AG04450 (cell line): ENCODE measurements at regions of chr6 and their contacts with region 1.

Region 1: GRCh38 chr6:16761471-16762267 is 409 bp upstream of the ATXN1 start:
- DNase-seq: peak; percentile 80
- H3K4me3 ChIP-seq: peak overlapping the region; percentile 88
- H3K27ac ChIP-seq: peak overlapping the region; percentile 75
- H3K27me3 ChIP-seq: no peaks in the 10 kb centered on the region
- CTCF ChIP-seq: no peak; the same call in 1 of the 2 replicates

Region 2: DNA sequence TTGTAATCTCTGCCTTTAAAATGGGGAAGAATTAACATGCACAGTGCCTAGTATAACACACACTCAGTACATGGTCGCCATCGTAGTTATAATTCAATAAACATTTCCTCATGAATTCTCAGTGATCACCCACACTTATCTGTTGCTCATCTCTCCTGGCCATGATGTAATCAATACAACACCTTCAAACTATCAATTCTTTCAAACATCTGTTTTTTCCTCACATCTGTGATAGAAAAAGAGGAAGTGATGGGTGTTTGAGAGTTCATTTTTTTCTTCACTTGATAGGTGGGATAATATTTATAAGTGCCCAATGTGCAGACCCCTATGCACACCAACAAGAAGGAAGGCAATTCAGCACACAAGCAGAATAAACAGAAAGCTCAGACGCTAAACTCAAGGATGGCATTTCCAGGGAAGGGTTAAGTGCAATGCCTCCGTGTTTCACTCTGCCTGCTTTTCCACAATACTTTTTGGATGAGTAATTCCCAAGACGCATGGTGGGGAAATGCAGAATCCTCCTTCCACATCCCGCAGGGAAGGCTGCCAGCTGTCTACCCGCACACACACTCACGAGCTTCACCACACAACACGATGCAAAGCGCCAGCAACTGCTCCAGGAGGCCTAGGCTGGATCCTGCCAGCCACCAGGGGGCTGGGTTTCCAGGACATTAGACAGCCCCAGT is 422.9 kb before region 1 on chr6:
- CTCF ChIA-PET with region 1: interaction called, 38 read pairs
- POLR2A ChIA-PET with region 1: interaction called, 5 read pairs
- DNase-seq: peak; percentile 99
- H3K4me3 ChIP-seq: no peak overlapping the region
- H3K27ac ChIP-seq: peak overlapping the region; percentile 93
- H3K27me3 ChIP-seq: no peaks in the 10 kb centered on the region
- CTCF ChIP-seq: peak; percentile 85

Region 3: DNA sequence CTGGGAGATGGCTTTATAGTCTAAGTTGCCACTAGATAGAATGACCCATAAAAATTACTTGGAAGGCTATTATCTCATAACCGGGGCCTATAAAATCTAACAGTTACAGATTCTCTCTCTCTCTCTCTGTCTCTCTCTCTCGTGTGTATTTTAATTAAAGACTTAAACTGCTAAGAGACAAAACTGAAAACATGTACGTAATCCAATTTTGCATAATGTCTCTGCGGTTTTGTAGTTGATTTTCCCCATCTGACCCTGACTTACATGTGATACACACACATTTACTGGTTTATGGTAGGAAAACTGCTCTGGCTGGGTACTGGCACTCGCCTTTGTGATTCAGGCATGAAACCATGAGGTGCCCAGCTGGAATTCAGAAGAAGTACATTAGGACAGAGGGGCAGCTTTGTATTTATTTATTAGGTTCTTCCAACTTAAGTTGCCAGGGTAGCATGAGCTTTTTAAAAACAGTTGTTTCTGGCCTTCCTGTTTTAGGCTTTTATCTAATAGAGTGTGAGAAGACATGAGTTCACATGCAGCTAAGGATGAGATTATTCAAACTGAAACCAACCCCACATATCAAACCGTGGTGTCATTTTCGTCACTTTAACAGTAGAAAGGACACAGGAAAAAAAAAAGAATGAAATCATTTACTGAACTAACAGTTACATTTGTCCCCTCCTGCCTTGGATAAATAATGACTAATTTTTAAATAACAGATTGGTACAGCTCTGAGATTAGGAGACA is 340.8 kb before region 1 on chr6:
- CTCF ChIA-PET with region 1: interaction called, 10 read pairs
- POLR2A ChIA-PET with region 1: no interaction called
- DNase-seq: peak; percentile 33
- H3K4me3 ChIP-seq: no peak overlapping the region
- H3K27ac ChIP-seq: no peak overlapping the region
- H3K27me3 ChIP-seq: no peaks in the 10 kb centered on the region
- CTCF ChIP-seq: no peak

Region 4: DNA sequence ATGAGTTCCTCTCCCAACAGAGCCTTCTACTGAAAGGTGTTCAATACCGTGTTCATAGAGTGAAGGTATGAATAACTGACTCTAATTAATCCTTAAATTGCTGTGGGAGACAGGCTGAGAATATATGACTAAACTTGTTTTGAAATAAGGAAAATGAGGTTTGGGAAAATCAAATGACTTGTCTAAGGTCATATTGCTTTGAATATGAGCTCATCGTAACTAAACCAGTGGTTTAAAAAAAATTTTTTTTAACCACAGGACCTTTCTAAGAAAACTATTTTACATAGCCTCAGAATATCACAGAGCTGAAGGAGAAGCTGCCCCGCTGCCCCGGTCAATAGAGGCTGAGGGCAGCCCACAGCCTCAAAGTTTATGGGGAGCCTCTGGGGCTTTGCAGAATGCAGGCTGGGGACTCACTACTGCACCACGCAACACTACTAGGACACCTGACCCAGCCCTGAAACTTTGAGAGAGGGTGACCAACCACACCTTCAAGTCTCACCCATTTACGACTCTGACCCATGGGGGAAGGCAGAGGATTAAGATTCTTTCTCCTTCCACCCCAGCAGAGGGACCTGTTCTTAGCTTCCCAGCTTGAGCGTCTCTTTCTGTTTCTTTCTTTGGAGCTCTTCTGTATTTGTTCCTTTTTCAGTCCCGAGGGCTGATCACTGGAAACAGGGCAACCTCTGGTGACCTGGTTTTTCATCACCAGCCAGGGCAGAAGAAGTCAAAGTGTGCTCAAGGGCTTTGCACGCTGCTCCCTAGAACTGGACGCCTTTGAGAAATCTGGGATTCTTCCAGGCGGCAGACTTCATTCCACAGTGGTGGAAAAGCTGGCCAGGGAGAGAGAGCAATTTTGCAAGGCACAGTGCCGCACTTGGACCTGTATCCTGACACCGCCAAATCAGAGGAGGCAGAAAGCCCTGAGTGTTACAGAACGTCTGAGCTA is 220.6 kb before region 1 on chr6:
- CTCF ChIA-PET with region 1: interaction called, 6 read pairs
- POLR2A ChIA-PET with region 1: interaction called, 10 read pairs
- DNase-seq: no peak
- H3K4me3 ChIP-seq: no peak overlapping the region
- H3K27ac ChIP-seq: no peak overlapping the region
- H3K27me3 ChIP-seq: no peaks in the 10 kb centered on the region
- CTCF ChIP-seq: peak; percentile 8; the same call in 1 of the 2 replicates

Region 5: GRCh38 chr6:16964553-16965501 is 203.2 kb after region 1 on chr6:
- CTCF ChIA-PET with region 1: interaction called, 63 read pairs
- POLR2A ChIA-PET with region 1: interaction called, 3 read pairs
- DNase-seq: peak; percentile 29
- H3K4me3 ChIP-seq: no peak overlapping the region
- H3K27ac ChIP-seq: peak overlapping the region; percentile 11
- H3K27me3 ChIP-seq: no peaks in the 10 kb centered on the region
- CTCF ChIP-seq: peak; percentile 94